ENCODE measurements at regions of chr1 and their contacts with region 1.

Region 1: DNA sequence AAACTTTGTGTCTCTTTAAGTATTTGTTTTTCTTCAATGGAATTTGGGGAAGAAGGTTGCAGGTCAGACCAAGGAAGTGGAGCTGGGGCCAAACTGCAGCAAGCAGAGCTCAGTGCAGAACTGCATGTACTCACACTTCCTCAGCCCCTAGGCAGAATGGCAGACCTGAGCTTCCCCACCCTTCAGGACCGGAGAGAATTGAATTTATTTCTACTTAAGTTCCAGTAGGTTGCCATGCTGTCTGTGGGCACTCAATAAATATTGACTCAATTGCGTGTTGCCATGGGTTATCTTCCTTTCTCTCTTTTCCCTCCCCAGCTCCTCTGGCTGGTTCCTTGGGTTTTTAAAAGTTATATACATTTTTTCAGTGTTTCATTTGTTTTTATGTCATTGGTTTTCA is 173.5 kb downstream of the PTGER3 start:
- DNase-seq: no peak
- H3K4me3 ChIP-seq: no peak overlapping the region
- H3K27ac ChIP-seq: no peak overlapping the region
- H3K27me3 ChIP-seq: peaks cover 0 to 3% (median 0%) of the 10 kb centered on the region in 45 donors
- CTCF ChIP-seq: no peak

Region 2: GRCh38 chr1:70509996-70510876 is 363.9 kb before region 1 on chr1:
- intact Hi-C with region 1: no loop called
- DNase-seq: no peak
- H3K4me3 ChIP-seq: no peak overlapping the region
- H3K27ac ChIP-seq: no peak overlapping the region
- H3K27me3 ChIP-seq: peaks cover 0 to 4% (median 0%) of the 10 kb centered on the region in 45 donors
- CTCF ChIP-seq: peak; percentile 54 to 91 (median 72)

Region 3: DNA sequence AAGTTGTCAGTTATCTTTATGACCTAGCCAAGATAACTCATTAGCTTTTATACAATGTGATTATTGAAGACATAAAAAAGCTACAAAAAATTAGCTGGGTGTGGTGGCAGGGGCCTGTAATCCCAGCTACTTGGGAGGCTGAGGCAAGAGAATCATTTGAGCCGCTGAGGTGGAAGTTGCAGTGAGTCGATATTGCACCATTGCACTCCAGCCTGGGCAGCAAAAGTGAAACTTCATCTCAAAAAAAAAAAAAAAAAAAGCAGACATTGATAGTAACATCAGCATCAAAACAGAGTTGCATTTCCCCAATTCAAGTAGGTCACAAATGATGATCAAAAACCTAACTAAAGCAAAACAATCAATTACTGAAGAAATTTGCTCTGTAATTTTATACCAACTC is 17.9 kb before region 1 on chr1:
- intact Hi-C with region 1: loop called in 1 of 2 experiments (anchors 1 kb)
- DNase-seq: no peak
- H3K4me3 ChIP-seq: no peak overlapping the region
- H3K27ac ChIP-seq: no peak overlapping the region
- H3K27me3 ChIP-seq: peaks cover 0 to 10% (median 0%) of the 10 kb centered on the region in 45 donors
- CTCF ChIP-seq: no peak

Measured in dorsolateral prefrontal cortex (tissue), 120 donors.